ENCODE measurements at regions of chr14 and their contacts with region 1.

Region 1: DNA sequence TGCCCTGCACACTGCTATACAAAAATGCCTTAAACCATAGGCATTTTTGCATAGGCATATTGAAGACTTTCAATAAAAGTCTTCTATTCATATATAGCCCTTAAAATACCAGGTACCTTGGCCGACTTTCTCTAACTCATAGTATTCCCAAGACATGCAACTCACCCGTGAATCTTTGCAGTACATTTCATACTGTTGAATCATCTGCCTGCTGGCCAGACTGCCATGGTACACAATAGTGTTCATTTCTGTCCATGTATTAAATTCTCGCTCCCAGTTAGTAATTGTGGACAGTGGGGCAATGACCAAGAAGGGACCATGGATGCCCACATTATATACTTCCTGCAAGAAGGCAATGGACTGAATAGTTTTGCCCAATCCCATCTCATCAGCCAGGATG is 24.3 kb upstream of the SUPT16H start:
- DNase-seq: no peak
- ATAC-seq: no peak
- H3K4me3 Mint-ChIP-seq: no peak overlapping the region
- H3K27ac Mint-ChIP-seq: no peak overlapping the region
- H3K4me1 Mint-ChIP-seq: no peaks in the 10 kb centered on the region
- H3K27me3 Mint-ChIP-seq: no peaks in the 10 kb centered on the region
- CTCF ChIP-seq: no peak

Region 2: GRCh38 chr14:21367582-21368144 is 40.5 kb before region 1 on chr14:
- CTCF ChIA-PET with region 1: no interaction called
- POLR2A ChIA-PET with region 1: no interaction called
- intact Hi-C with region 1: loop called (anchors 5 kb)
- DNase-seq: no peak
- ATAC-seq: no peak
- H3K4me3 Mint-ChIP-seq: no peak overlapping the region
- H3K27ac Mint-ChIP-seq: no peak overlapping the region
- H3K4me1 Mint-ChIP-seq: peaks cover 3% of the 10 kb centered on the region
- H3K27me3 Mint-ChIP-seq: no peaks in the 10 kb centered on the region
- CTCF ChIP-seq: no peak

Measured in activated B cell treated with CpG ODN at 0.5 μM for 24 hours (primary cell).